Right cardiac atrium (tissue), 5 donors: ENCODE measurements at regions of chr15 and their contacts with region 1.

Region 1: DNA sequence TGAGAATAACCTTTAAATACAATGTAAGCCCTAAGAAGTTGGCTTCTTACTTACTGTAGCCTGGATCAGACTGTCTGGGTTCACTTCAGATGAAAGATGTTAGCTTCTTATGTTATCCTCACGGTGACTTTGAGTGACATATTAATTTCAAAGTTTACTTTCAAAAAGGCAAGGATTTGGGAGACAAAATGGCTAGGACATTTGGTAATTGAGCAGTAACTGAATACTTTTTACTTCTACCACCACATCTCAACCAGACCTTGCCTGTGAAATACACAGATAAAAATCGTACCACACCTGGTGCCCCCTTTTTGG is 36.0 kb upstream of the BNIP2 start:
- DNase-seq: no peak
- ATAC-seq: no peak
- H3K4me3 ChIP-seq: no peak overlapping the region
- H3K27ac ChIP-seq: no peak overlapping the region
- H3K4me1 ChIP-seq: no peaks in the 10 kb centered on the region
- H3K27me3 ChIP-seq: no peaks in the 10 kb centered on the region

Region 2: DNA sequence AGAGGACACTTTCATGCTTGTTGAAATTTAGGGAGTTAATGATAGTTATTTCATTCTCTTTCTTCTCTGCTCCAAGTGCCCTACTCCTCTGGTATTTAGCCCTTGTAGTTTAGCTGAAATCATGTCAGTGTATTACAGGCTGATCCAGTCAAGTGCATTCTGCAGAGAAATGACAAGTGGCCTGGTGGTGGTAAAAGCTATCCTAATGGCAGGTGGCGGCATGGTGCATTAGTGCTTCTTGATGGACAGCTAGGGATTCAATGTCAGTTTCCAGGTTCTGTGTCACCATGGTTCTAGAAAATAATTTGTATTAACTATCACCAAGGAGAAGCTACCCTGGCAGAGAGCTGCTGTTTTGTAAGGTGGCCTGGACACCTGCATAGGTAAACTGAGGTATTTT is 54.0 kb after region 1 on chr15:
- intact Hi-C with region 1: no loop called
- DNase-seq: no peak
- ATAC-seq: no peak
- H3K4me3 ChIP-seq: no peak overlapping the region
- H3K27ac ChIP-seq: no peak overlapping the region
- H3K4me1 ChIP-seq: no peaks in the 10 kb centered on the region
- H3K27me3 ChIP-seq: no peaks in the 10 kb centered on the region

Region 3: GRCh38 chr15:59879506-59880265 is 154.6 kb after region 1 on chr15:
- intact Hi-C with region 1: no loop called
- DNase-seq: no peak
- ATAC-seq: peak; percentile 33 to 69
- H3K4me3 ChIP-seq: no peak overlapping the region
- H3K27ac ChIP-seq: no peak overlapping the region
- H3K4me1 ChIP-seq: no peaks in the 10 kb centered on the region
- H3K27me3 ChIP-seq: peaks cover 3% of the 10 kb centered on the region

Region 4: GRCh38 chr15:60179786-60180391 is 454.8 kb after region 1 on chr15:
- intact Hi-C with region 1: loop called in 1 of 4 experiments (anchors 10 kb)
- DNase-seq: no peak
- ATAC-seq: no peak
- H3K4me3 ChIP-seq: no peak overlapping the region
- H3K27ac ChIP-seq: no peak overlapping the region
- H3K4me1 ChIP-seq: no peaks in the 10 kb centered on the region
- H3K27me3 ChIP-seq: no peaks in the 10 kb centered on the region

Region 5: GRCh38 chr15:60315878-60316277 is 590.7 kb after region 1 on chr15:
- intact Hi-C with region 1: loop called in 3 of 4 experiments (anchors 10 kb)
- DNase-seq: no peak
- ATAC-seq: no peak
- H3K4me3 ChIP-seq: no peak overlapping the region
- H3K27ac ChIP-seq: no peak overlapping the region
- H3K4me1 ChIP-seq: no peaks in the 10 kb centered on the region
- H3K27me3 ChIP-seq: no peaks in the 10 kb centered on the region

Region 6: DNA sequence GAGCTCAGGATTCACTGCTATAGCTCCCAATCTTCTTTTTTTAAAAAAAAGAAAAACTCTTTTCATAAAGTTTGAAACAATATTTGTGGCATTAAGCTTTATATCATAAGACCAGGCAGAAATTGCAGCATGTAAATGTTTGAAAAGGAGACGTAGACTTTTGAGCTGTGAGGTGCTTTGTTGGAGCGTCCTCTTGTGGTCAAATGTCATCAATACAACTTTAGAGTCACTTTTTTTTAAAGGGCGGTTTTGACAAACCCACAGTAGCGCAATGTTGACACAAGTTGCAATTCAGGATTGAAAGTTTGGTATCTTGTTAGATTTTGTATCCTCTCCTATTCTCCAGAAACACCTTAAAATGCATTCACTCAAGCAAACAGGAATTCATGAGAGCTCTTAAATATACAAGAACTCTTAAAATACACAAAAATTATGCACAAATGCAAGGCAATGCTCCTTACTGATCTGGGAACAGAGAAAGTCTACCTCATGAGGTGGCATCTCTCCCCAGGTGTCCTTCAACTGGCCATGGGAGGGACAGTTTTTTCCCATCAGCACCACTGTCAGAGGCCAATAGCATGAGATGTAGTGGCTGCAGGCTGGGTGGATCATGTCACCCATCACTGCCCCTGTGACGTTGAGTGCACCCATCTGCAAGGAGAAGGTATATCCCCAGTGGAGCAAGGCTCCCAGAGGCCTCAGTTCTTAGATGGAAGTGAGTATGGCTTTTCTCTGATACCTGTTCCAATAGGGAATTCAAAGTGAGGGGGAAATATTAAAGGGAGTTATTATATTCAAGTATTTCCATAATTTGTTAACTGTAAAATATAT is 601.9 kb after region 1 on chr15:
- intact Hi-C with region 1: loop called in 2 of 4 experiments (anchors 10 kb)
- DNase-seq: no peak
- ATAC-seq: no peak
- H3K4me3 ChIP-seq: no peak overlapping the region
- H3K27ac ChIP-seq: no peak overlapping the region
- H3K4me1 ChIP-seq: no peaks in the 10 kb centered on the region
- H3K27me3 ChIP-seq: no peaks in the 10 kb centered on the region